ENCODE measurements at regions of chr6 and their contacts with region 1.

Region 1: DNA sequence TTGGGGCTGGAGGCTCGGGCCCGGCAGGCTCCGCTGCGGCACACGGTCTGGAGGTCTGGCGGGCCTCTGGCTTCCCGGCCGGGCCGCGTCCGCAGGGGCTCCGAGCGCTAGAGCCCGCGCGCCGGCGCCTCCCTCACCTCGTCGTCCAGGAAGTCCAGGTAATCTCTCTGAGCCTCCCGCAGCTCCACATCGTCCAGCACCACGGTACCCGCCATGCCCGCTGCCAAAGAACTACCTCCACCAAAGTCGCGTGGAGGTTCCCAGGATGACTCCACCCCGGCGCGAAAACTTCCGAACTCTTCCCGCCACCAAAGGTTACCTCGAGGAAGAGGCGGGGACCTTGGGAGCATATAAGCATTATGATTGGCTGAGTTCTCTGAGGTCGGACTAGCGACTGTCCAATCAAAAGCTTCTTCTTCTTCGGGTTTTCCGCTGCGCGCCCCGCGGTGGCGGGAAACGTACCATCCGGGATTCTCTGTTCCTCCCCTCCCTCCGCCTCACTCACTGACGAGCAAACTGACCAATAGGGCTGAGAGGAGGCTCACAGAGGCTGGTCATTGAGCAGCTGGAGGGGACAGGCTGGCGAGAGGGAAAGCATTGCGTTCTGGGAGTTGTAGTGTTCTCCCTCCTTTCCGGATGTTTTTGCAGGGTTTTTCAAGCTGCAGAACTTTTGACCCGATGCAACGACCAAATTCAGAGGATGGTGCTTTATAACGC is at the start of gene MCM3:
- DNase-seq: peak; percentile 100
- ATAC-seq: peak; percentile 96
- H3K4me3 ChIP-seq: peak within 1 kb of the TSS; percentile 79
- H3K27ac ChIP-seq: peak within 1 kb of the TSS; percentile 81
- H3K4me1 ChIP-seq: peaks cover 8% of the 10 kb centered on the region; the same call in 1 of the 2 replicates
- H3K27me3 ChIP-seq: no peaks in the 10 kb centered on the region
- CTCF ChIP-seq: peak; percentile 1 to 26 (median 3); a peak in 2 of 6 replicates
- EP300 ChIP-seq: no peak
- POLR2A ChIP-seq: peak; percentile 88
- RAD21 ChIP-seq: no peak
- polyA plus RNA-seq, gene MCM3: 74.1 to 96.3 TPM

Region 2: GRCh38 chr6:52115891-52116604 is 168.6 kb before region 1 on chr6:
- CTCF ChIA-PET with region 1: no interaction called
- POLR2A ChIA-PET with region 1: no interaction called
- RAD21 ChIA-PET with region 1: no interaction called
- SMC1A ChIA-PET with region 1: no interaction called
- in situ Hi-C with region 1: no loop called
- intact Hi-C with region 1: no loop called
- DNase-seq: no peak
- ATAC-seq: no peak
- H3K4me3 ChIP-seq: no peak overlapping the region
- H3K27ac ChIP-seq: no peak overlapping the region
- H3K4me1 ChIP-seq: no peaks in the 10 kb centered on the region
- H3K27me3 ChIP-seq: peaks cover 0 to 2% of the 10 kb centered on the region in 2 experiments; a peak in 3 of 4 replicates
- CTCF ChIP-seq: no peak
- EP300 ChIP-seq: no peak
- POLR2A ChIP-seq: no peak
- RAD21 ChIP-seq: no peak

Region 3: DNA sequence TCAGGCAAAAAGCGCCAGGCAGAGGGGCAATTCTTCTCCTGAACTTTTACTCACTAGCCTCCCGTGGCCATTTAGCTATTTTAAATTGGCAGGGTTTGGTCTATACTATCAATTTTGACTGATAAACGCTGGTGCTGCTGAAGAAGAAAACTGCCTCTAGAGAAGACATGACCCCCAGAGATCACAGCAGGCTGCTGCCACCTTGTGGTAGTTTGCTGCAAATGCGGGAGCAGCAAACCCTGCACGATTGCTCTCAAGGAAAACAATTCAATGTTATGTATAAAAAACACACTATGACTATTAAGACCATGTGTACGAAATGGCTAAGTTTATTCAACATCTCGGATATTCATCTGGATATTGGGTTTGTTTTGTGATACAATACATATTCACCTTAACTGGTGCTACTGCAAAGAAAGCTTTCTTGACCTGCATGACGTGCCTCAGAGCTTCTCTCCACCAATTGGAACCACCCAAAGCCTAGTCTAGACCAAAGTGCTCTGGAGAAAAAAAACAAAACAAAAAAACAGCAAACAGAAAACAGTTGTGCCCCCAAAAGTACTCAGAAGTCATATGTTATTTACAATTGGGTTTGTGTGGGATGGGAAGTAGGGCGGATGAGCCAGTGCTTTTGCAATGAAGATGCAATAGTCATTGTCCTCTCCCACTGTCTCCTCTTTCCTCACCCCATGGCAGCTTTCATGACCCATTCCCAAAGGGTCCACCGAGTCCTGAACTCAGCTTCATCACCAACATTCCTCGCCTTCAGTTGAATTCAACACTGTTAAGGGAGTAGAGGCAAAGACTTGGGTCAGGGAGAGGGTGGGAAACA is 20.7 kb before region 1 on chr6:
- CTCF ChIA-PET with region 1: interaction called, 52 read pairs
- POLR2A ChIA-PET with region 1: interaction called, 3 read pairs
- RAD21 ChIA-PET with region 1: interaction called, 13 read pairs
- SMC1A ChIA-PET with region 1: interaction called, 15 read pairs
- in situ Hi-C with region 1: no loop called
- intact Hi-C with region 1: no loop called
- DNase-seq: no peak
- ATAC-seq: peak; percentile 92
- H3K4me3 ChIP-seq: no peak overlapping the region
- H3K27ac ChIP-seq: no peak overlapping the region
- H3K4me1 ChIP-seq: no peaks in the 10 kb centered on the region
- H3K27me3 ChIP-seq: no peaks in the 10 kb centered on the region
- CTCF ChIP-seq: peak; percentile 91 to 97 (median 96); a peak in 5 of 6 replicates
- EP300 ChIP-seq: no peak
- POLR2A ChIP-seq: 0 out of 2 replicates have a peak, but pooled peaks have one; percentile 23
- RAD21 ChIP-seq: peak; percentile 94

Region 4: GRCh38 chr6:52304983-52305390 is 20.4 kb after region 1 on chr6:
- CTCF ChIA-PET with region 1: interaction called, 59 read pairs
- POLR2A ChIA-PET with region 1: interaction called, 18 read pairs
- RAD21 ChIA-PET with region 1: interaction called, 70 read pairs
- SMC1A ChIA-PET with region 1: interaction called, 38 read pairs
- in situ Hi-C with region 1: no loop called
- intact Hi-C with region 1: loop called (anchors 2 kb)
- DNase-seq: no peak
- ATAC-seq: peak; percentile 74
- H3K4me3 ChIP-seq: peak overlapping the region; percentile 25; the same call in 1 of the 2 replicates
- H3K27ac ChIP-seq: peak overlapping the region; percentile 89
- H3K4me1 ChIP-seq: peaks cover 49% of the 10 kb centered on the region
- H3K27me3 ChIP-seq: no peaks in the 10 kb centered on the region
- CTCF ChIP-seq: no peak
- EP300 ChIP-seq: peak in 1 of 2 experiments; percentile 46; a peak in 2 of 4 replicates
- POLR2A ChIP-seq: no peak
- RAD21 ChIP-seq: 0 out of 2 replicates have a peak, but pooled peaks have one; percentile 1

Region 5: GRCh38 chr6:52371656-52372191 is 87.1 kb after region 1 on chr6:
- CTCF ChIA-PET with region 1: interaction called, 110 read pairs
- POLR2A ChIA-PET with region 1: interaction called, 4 read pairs
- RAD21 ChIA-PET with region 1: interaction called, 4 read pairs
- SMC1A ChIA-PET with region 1: interaction called, 112 read pairs
- in situ Hi-C with region 1: no loop called
- intact Hi-C with region 1: no loop called
- DNase-seq: no peak
- ATAC-seq: no peak
- H3K4me3 ChIP-seq: no peak overlapping the region
- H3K27ac ChIP-seq: no peak overlapping the region
- H3K4me1 ChIP-seq: peaks cover 11% of the 10 kb centered on the region
- H3K27me3 ChIP-seq: no peaks in the 10 kb centered on the region
- CTCF ChIP-seq: no peak
- EP300 ChIP-seq: no peak
- POLR2A ChIP-seq: no peak
- RAD21 ChIP-seq: no peak

Region 6: GRCh38 chr6:52399511-52400312 is 115.1 kb after region 1 on chr6:
- CTCF ChIA-PET with region 1: interaction called, 441 read pairs
- POLR2A ChIA-PET with region 1: interaction called, 28 read pairs
- RAD21 ChIA-PET with region 1: interaction called, 224 read pairs
- SMC1A ChIA-PET with region 1: interaction called, 358 read pairs
- in situ Hi-C with region 1: no loop called
- intact Hi-C with region 1: loop called (anchors 1 kb)
- DNase-seq: no peak
- ATAC-seq: peak; percentile 50
- H3K4me3 ChIP-seq: no peak overlapping the region
- H3K27ac ChIP-seq: no peak overlapping the region
- H3K4me1 ChIP-seq: peaks cover 37% of the 10 kb centered on the region
- H3K27me3 ChIP-seq: no peaks in the 10 kb centered on the region
- CTCF ChIP-seq: peak; percentile 84 to 93 (median 90); a peak in 5 of 6 replicates
- EP300 ChIP-seq: no peak
- POLR2A ChIP-seq: no peak
- RAD21 ChIP-seq: peak; percentile 98

Region 7: GRCh38 chr6:52497652-52498408 is 213.2 kb after region 1 on chr6:
- CTCF ChIA-PET with region 1: interaction called, 3 read pairs
- POLR2A ChIA-PET with region 1: interaction called, 3 read pairs
- RAD21 ChIA-PET with region 1: interaction called, 6 read pairs
- SMC1A ChIA-PET with region 1: interaction called, 9 read pairs
- in situ Hi-C with region 1: no loop called
- intact Hi-C with region 1: loop called (anchors 5 kb)
- DNase-seq: peak; percentile 95
- ATAC-seq: peak; percentile 87
- H3K4me3 ChIP-seq: peak overlapping the region; percentile 61
- H3K27ac ChIP-seq: peak overlapping the region; percentile 96
- H3K4me1 ChIP-seq: peaks cover 64% of the 10 kb centered on the region
- H3K27me3 ChIP-seq: no peaks in the 10 kb centered on the region
- CTCF ChIP-seq: no peak
- EP300 ChIP-seq: peak; percentile 94 to 95
- POLR2A ChIP-seq: no peak; the same call in 1 of the 2 replicates
- RAD21 ChIP-seq: no peak

Region 8: GRCh38 chr6:52529311-52529710 is 244.7 kb after region 1 on chr6:
- CTCF ChIA-PET with region 1: no interaction called
- POLR2A ChIA-PET with region 1: no interaction called
- RAD21 ChIA-PET with region 1: no interaction called
- SMC1A ChIA-PET with region 1: no interaction called
- in situ Hi-C with region 1: no loop called
- intact Hi-C with region 1: no loop called
- DNase-seq: no peak
- ATAC-seq: no peak
- H3K4me3 ChIP-seq: no peak overlapping the region
- H3K27ac ChIP-seq: peak overlapping the region; percentile 0; the same call in 1 of the 2 replicates
- H3K4me1 ChIP-seq: peaks cover 14% of the 10 kb centered on the region
- H3K27me3 ChIP-seq: no peaks in the 10 kb centered on the region
- CTCF ChIP-seq: no peak
- EP300 ChIP-seq: no peak
- POLR2A ChIP-seq: no peak
- RAD21 ChIP-seq: no peak

Region 9: DNA sequence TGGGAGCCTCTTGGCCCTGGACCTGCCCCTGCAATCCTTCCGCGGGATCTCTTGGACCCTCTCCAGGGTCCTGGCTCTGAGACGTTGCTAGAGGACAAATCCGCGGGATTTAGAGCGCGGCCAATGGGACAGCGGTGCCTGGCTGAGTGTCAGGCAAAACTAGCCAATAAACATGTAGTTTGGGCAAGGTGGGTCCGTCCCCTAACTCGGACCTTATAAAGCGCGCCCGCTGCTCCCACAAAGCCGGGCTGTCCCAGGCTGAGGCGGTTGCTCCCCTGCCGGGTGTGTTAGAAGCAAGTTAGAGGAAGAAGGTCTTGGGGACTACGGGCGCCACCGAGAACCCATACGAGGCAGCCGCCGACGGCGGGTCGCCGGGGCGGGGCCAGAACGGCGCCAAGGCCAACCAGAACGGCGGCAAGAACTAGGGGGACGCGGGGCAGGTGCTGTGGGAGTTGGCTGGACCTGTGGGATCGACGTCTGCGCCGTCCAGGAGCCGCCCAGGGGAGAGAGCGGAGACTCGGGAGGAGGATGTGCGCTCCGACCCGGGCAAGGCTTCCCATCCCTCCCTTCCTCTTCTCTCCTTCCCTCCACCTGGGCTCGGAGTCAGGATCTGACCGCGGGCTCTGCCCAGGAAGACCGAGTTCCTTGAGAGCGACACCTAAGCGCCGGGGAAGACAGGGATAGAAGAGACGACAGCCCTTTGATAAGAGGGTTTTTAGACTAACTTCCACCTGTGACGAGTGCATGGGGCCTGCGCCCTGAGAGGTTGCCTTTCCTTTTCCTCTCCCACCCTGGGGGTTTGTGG is 379.8 kb after region 1 on chr6:
- CTCF ChIA-PET with region 1: interaction called, 24 read pairs
- POLR2A ChIA-PET with region 1: interaction called, 8 read pairs
- RAD21 ChIA-PET with region 1: interaction called, 20 read pairs
- SMC1A ChIA-PET with region 1: interaction called, 16 read pairs
- in situ Hi-C with region 1: no loop called
- intact Hi-C with region 1: loop called (anchors 2 kb)
- DNase-seq: peak; percentile 83
- ATAC-seq: peak; percentile 94
- H3K4me3 ChIP-seq: peak overlapping the region; percentile 73
- H3K27ac ChIP-seq: peak overlapping the region; percentile 30
- H3K4me1 ChIP-seq: peaks cover 24% of the 10 kb centered on the region
- H3K27me3 ChIP-seq: no peaks in the 10 kb centered on the region
- CTCF ChIP-seq: no peak
- EP300 ChIP-seq: no peak
- POLR2A ChIP-seq: peak; percentile 95
- RAD21 ChIP-seq: no peak